HAP-1 (cell line): ENCODE measurements at regions of chr5 and their contacts with region 1.

Region 1: GRCh38 chr5:146426853-146427618 is 20.1 kb upstream of the TCERG1 start:
- DNase-seq: peak in 1 of 2 experiments; percentile 56
- H3K4me3 ChIP-seq: no peak overlapping the region
- H3K4me1 ChIP-seq: no peaks in the 10 kb centered on the region
- H3K27me3 ChIP-seq: peaks cover 14% of the 10 kb centered on the region

Region 2: DNA sequence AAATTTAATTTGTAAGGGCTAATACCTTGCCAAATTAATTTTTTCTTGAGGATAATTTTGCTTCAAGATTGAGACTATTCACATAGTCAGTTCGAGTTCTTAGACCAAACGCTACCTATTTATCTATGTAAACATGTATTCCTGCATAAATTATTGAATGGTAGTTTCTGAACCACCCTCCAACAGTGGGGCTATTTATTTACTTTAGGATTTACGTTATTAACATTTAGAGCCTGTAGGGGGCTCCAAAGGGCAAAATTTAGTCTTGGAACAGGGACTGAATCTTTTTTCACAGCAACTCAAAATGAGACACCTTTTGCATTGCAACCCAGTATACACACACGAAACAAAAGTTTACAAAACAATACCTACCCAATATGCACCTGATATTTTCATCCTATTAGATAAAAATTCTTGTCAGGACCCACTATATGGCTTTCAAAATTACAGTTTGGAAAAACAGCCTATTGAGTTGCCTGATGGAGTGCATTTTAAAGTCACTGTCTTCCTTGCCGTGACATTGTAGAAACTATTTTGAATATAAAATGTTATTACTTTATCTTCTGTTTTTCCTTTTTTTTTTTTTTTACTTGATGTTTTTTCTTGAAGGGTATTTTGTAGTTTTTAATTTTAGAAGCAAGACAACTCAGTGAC is 135.5 kb before region 1 on chr5:
- in situ Hi-C with region 1: loop called (anchors 10 kb)
- DNase-seq: peak; percentile 44 to 54
- H3K4me3 ChIP-seq: no peak overlapping the region
- H3K4me1 ChIP-seq: no peaks in the 10 kb centered on the region
- H3K27me3 ChIP-seq: no peaks in the 10 kb centered on the region